ENCODE measurements at regions of chr7 and their contacts with region 1.

Region 1: DNA sequence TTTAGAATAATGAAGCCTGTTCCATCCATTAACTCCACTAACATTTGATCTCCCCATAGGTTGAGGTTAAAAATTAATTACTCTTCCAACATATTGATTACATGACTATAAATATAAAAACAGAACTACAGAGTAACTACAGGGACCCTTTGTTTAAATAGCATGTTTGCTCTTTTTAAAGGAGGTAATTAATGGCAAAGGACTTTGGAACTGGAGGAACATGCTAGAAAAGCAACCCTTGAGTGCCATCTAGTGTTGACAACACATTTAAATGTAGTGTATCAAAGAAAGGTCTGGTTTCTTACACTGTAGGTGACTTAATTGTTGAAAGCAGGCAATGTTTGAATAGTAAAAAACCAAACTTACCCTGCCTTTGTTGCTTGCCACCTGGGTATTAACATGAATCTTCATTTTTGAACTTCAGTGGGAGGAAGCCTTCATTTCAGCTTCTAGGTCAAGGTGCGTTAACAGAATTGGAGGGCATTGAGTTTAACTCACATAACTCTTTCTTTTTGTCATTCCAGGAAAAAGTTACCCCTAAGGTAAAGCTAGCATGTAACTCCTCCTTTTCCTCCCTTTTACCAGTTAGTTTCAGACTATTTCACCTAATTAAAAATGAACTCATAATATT is 52.6 kb upstream of the CAPZA2 start:
- DNase-seq: no peak
- ATAC-seq: peak; percentile 67

Region 2: GRCh38 chr7:116173051-116174028 is 636.4 kb before region 1 on chr7:
- intact Hi-C with region 1: loop called in 1 of 2 experiments (anchors 10 kb)
- DNase-seq: no peak
- ATAC-seq: peak; percentile 67

Region 3: DNA sequence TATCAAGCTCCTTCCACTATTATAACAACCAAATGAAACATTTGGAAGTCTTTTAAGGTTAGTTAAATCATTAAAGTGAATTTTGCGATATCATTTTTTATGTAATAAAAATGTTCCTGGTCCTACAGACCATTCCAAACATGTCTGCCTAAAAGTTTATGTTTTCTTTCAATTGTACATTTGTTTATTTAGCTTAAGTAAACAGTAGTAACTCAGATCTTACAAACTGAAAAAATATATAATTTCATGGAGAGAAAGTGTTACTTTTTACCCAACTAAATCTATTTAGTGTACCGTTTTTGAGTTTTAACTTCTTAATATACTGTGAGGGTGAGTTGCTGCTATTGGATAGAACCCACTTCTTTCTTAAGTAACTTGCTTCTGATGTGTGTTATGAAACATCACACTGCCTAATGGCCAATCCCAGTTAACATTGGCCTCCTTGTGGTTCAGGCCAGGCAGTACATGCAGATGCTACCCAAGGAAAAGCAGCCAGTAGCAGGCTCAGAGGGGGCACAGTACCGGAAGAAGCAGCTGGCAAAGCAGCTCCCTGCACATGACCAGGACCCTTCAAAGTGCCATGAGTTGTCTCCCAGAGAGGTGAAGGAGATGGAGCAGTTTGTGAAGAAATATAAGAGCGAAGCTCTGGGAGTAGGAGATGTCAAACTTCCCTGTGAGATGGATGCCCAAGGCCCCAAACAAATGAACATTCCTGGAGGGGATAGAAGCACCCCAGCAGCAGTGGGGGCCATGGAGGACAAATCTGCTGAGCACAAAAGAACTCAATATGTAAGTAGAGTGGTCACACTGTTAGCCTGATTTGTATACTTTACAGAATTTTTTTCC is 559.8 kb before region 1 on chr7:
- intact Hi-C with region 1: loop called in 1 of 2 experiments (anchors 5 kb)
- DNase-seq: no peak
- ATAC-seq: peak; percentile 69

Region 4: DNA sequence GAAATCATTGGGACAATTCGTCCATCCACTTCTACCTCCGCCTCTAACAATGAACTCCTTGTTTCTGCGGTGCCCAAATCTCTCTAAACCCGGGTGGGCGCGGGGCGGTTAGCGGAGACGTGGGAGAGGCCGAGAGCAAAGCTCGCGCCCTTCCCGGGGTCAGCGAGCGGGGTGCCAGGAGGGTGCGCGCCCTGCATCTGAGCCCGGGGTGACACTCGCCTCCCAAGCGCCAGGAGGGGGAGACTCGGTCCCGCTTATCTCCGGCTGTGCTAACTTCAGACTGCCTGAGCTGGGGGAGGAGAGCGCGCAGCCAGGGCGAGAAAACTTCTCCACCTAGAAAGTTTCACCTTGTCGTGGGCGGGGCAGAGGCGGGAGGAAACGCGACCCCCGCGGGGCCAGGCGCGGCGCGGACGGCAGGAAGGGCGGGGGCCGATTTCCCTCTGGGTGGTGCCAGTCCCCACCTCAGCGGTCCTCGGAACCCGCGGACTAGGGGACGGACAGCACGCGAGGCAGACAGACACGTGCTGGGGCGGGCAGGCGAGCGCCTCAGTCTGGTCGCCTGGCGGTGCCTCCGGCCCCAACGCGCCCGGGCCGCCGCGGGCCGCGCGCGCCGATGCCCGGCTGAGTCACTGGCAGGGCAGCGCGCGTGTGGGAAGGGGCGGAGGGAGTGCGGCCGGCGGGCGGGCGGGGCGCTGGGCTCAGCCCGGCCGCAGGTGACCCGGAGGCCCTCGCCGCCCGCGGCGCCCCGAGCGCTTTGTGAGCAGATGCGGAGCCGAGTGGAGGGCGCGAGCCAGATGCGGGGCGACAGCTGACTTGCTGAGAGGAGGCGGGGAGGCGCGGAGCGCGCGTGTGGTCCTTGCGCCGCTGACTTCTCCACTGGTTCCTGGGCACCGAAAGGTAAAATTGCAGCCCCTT is 137.8 kb before region 1 on chr7 and contains the start of gene MET:
- intact Hi-C with region 1: loop called in 1 of 2 experiments (anchors 2 kb)
- DNase-seq: peak; percentile 85 to 88
- ATAC-seq: peak; percentile 91
- total RNA-seq, gene MET: 41.2 TPM